HCT116 (cell line): ENCODE measurements at regions of chr2 and their contacts with region 1.

Region 1: DNA sequence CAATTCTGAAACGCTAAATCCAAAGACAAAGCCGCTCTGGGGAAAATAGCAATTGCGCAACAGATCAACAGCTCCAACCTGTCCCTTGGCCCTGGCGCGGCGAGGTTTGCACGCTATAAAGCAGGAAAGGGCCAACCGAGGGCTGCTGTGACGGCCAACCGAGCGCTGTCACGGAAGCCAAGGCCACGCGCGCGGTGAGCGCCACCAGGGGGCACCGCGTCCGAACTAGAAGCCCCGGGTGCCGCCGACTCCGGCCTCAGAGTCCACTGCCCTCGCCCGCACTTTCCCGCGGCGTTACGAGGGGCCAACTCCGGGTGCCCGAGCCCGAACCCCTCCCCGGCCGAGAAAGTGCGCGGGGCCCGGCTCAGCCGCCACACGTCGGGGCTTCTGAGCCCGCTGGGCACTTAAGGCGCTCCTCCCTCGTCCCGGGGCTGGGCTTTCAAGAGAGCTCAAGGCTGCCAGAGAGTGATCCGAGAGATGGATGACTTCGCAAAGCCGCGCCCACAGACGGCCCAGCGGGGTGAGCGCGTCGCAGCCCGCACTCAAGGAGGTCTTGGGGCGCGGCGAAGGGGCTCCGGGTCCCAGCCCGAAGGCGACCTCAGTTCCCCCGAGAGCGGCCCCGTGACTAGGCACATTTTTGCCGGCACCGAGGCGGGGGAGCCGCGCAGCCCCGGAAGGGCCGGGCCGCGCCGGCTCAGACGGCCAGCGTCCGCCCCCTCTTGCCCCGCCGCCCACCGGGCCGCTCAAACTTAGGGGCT is 897 bp downstream of the NFE2L2 start:
- DNase-seq: peak; percentile 94
- ATAC-seq: peak; percentile 63
- H3K4me3 ChIP-seq: peak overlapping the region; percentile 76 to 83
- H3K27ac ChIP-seq: peak overlapping the region; percentile 92
- H3K4me1 ChIP-seq: peaks cover 28 to 48% of the 10 kb centered on the region in 2 experiments
- H3K27me3 ChIP-seq: no peaks in the 10 kb centered on the region
- CTCF ChIP-seq: peak; percentile 56 to 81 (median 68)
- POLR2A ChIP-seq: peak; percentile 49
- RAD21 ChIP-seq: peak; percentile 68

Region 2: DNA sequence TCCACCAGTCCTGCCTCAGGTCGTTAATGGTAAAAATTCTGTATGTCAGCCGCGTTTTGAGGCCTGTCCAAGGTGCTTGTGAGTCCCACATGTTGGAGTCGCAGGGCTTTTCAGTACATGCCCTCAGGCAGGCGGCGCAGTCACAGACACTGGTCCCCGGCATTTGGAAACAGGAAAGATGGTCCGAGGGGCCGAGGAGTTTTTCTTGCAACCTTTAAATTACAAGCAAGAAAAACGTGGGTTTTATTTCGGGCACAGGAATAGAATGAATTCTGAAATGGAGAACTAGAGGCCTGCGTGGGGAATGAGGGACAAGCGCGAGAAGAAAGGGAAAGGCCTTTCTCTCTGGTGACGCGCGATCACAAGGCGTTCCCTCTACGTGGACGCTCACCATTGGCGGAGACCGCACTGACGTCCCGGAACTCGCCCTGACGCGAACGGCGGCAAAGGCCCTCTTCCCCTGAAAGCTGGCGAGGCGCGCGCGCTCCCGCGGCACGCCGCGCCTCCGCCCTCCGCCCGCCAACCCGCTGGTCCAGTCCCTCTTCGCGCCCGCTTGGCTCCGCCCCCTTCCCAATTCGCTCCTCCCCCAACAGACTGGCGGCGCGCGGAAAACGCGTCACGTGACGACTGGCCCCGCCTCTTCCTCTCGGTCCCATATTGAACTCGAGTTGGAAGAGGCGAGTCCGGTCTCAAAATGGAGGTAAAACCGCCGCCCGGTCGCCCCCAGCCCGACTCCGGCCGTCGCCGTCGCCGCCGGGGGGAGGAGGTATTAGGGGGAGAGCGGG is 51.3 kb before region 1 on chr2 and contains the start of gene HNRNPA3:
- CTCF ChIA-PET with region 1: no interaction called
- POLR2A ChIA-PET with region 1: interaction called, 4 read pairs
- RAD21 ChIA-PET with region 1: no interaction called
- intact Hi-C with region 1: loop called (anchors 1 kb)
- DNase-seq: peak; percentile 97
- ATAC-seq: peak; percentile 92
- H3K4me3 ChIP-seq: peak within 1 kb of the TSS; percentile 81 to 92
- H3K27ac ChIP-seq: peak within 1 kb of the TSS; percentile 93
- H3K4me1 ChIP-seq: peaks cover 11 to 19% of the 10 kb centered on the region in 2 experiments
- H3K27me3 ChIP-seq: no peaks in the 10 kb centered on the region
- CTCF ChIP-seq: 0 out of 6 replicates have a peak, but pooled peaks of 1 of the 3 experiments have one; percentile 10
- POLR2A ChIP-seq: peak; percentile 72
- RAD21 ChIP-seq: no peak
- total RNA-seq, gene HNRNPA3: 328 TPM

Region 3: DNA sequence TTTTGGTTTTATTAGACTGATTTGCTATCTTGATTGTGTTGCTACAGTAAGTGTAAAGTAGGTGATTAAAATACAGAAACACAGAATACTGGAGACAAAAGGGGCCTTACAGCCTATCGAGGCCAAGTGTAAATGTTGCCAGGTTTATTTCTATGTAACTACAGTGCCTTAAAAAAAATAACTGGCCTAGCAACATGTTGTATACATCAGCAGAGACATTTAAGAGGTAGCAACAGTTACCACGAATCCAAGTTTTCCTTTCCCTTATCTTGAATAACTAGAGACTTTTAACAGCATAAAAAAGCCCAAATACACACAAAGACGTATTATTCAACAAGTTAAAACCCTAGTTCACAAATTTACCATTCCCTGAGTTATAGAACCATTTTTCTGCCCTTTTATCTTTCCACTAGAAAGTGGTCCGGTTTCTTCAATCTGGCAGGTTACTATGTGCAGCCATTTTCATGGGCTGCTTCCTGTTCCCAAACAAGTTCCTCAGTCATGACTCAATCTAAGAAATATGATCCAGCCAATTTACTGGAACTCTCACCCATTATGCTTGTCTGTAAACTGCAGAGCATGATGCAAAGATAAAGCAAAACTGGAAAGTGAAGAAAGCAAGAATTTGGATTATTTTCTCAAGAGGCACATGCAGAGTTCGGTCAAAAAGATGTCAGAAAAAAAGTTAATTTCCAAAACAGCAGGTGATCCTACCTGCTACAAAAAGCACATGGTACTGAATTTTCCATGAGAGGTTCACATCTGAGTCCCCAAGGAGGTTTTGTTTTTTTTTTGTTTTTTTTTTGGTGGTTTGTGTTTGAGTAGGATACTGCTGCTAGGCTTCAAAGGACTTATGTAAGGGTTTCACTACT is 21.3 kb before region 1 on chr2:
- CTCF ChIA-PET with region 1: interaction called, 5 read pairs
- POLR2A ChIA-PET with region 1: interaction called, 6 read pairs
- RAD21 ChIA-PET with region 1: no interaction called
- intact Hi-C with region 1: loop called (anchors 1 kb)
- DNase-seq: peak; percentile 83
- ATAC-seq: peak; percentile 71
- H3K4me3 ChIP-seq: peak overlapping the region; percentile 27 to 48
- H3K27ac ChIP-seq: peak overlapping the region; percentile 81
- H3K4me1 ChIP-seq: peaks cover 66 to 77% of the 10 kb centered on the region in 2 experiments
- H3K27me3 ChIP-seq: no peaks in the 10 kb centered on the region
- CTCF ChIP-seq: no peak
- POLR2A ChIP-seq: no peak
- RAD21 ChIP-seq: no peak

Region 4: DNA sequence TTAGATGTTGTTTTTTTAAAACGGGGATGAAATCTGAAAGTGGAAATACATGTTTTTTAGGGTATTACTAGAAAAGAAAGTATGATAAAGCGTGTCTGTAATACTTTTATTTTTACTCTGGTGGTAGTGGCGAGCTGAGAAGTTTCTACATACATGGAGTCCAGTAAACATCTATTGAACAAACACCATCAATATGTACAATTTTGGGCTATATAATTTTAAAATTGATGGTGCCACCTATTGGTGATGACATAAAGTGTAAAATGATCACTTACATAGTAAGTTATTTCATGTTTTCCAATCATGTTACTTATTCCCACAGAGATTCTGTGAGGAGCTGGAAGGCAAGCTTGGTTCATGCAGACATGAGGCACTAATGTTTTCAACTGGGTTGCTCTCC is 32.4 kb after region 1 on chr2:
- CTCF ChIA-PET with region 1: interaction called, 10 read pairs
- POLR2A ChIA-PET with region 1: no interaction called
- RAD21 ChIA-PET with region 1: no interaction called
- intact Hi-C with region 1: no loop called
- DNase-seq: peak; percentile 13
- ATAC-seq: peak; percentile 72
- H3K4me3 ChIP-seq: no peak overlapping the region
- H3K27ac ChIP-seq: no peak overlapping the region
- H3K4me1 ChIP-seq: no peaks in the 10 kb centered on the region
- H3K27me3 ChIP-seq: no peaks in the 10 kb centered on the region
- CTCF ChIP-seq: peak; percentile 10 to 58 (median 37); a peak in 3 of 6 replicates
- POLR2A ChIP-seq: no peak
- RAD21 ChIP-seq: peak; percentile 58

Region 5: GRCh38 chr2:177332041-177332991 is 68.7 kb after region 1 on chr2:
- CTCF ChIA-PET with region 1: interaction called, 3 read pairs
- POLR2A ChIA-PET with region 1: no interaction called
- RAD21 ChIA-PET with region 1: no interaction called
- intact Hi-C with region 1: loop called (anchors 1 kb)
- DNase-seq: peak; percentile 39
- ATAC-seq: peak; percentile 78
- H3K4me3 ChIP-seq: no peak overlapping the region
- H3K27ac ChIP-seq: no peak overlapping the region
- H3K4me1 ChIP-seq: peaks cover 8 to 21% of the 10 kb centered on the region in 2 experiments
- H3K27me3 ChIP-seq: no peaks in the 10 kb centered on the region
- CTCF ChIP-seq: peak; percentile 57 to 82 (median 64); a peak in 5 of 6 replicates
- POLR2A ChIP-seq: no peak
- RAD21 ChIP-seq: peak; percentile 89

Region 6: GRCh38 chr2:177419274-177419673 is 155.6 kb after region 1 on chr2:
- CTCF ChIA-PET with region 1: interaction called, 8 read pairs
- POLR2A ChIA-PET with region 1: interaction called, 4 read pairs
- RAD21 ChIA-PET with region 1: no interaction called
- intact Hi-C with region 1: loop called (anchors 1 kb)
- DNase-seq: no peak
- ATAC-seq: no peak
- H3K4me3 ChIP-seq: no peak overlapping the region
- H3K27ac ChIP-seq: no peak overlapping the region
- H3K4me1 ChIP-seq: peaks cover 0 to 9% of the 10 kb centered on the region in 2 experiments; a peak in 2 of 4 replicates
- H3K27me3 ChIP-seq: no peaks in the 10 kb centered on the region
- CTCF ChIP-seq: no peak
- POLR2A ChIP-seq: no peak
- RAD21 ChIP-seq: no peak

Region 7: DNA sequence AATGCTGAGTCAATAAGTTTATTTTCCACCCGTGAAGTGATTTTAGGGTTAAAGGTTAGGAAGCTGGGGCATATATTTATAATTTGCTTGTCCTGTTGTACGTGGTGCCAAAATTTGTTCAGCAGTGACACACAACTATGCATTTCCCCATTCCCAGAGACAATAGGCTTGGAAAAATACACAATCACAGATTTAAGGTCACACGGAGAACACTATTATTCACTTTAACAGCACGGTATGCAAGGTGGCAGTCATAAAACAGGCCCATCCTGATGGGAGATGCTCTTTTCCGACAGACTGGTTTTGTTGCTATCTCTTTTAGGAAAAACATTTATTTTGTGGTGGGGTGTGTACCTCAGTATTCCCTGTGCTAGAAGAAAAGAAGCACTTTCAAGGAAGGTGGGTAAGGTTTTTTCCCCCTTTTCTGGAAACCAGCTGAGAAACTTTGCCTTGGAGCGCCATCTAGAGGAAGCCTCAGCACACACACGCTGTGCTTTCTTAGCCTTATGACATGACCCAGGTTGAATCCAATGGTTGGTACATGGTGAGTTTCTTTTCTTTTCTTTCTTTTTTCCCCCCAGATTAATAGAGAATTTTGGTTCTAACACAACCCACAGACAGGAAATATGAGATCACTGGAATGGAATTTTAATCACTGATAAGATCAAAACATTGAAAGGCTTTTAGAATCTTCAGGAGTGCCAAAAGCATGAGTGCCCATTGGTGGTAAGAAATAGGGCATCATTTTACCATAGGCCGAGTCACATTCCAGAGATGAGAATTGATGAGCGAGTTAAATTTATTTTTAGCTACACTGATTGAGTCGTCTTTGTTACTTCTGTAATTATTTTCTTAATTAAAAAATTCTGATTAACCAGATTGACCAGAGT is 461.0 kb after region 1 on chr2:
- CTCF ChIA-PET with region 1: no interaction called
- POLR2A ChIA-PET with region 1: no interaction called
- RAD21 ChIA-PET with region 1: no interaction called
- intact Hi-C with region 1: loop called (anchors 1 kb)
- DNase-seq: peak; percentile 27
- ATAC-seq: peak; percentile 95
- H3K4me3 ChIP-seq: no peak overlapping the region
- H3K27ac ChIP-seq: no peak overlapping the region
- H3K4me1 ChIP-seq: no peaks in the 10 kb centered on the region
- H3K27me3 ChIP-seq: no peaks in the 10 kb centered on the region
- CTCF ChIP-seq: peak; percentile 79 to 97 (median 93); a peak in 5 of 6 replicates
- POLR2A ChIP-seq: no peak
- RAD21 ChIP-seq: peak; percentile 86